Activated naive CD4-positive, alpha-beta T cell treated with anti-CD3 and anti-CD28 coated beads, Interleukin-2, amount 10 ng/mL, durations not matched to agents 7 days and 5 days (primary cell): ENCODE measurements at regions of chr17 and their contacts with region 1.

Region 1: DNA sequence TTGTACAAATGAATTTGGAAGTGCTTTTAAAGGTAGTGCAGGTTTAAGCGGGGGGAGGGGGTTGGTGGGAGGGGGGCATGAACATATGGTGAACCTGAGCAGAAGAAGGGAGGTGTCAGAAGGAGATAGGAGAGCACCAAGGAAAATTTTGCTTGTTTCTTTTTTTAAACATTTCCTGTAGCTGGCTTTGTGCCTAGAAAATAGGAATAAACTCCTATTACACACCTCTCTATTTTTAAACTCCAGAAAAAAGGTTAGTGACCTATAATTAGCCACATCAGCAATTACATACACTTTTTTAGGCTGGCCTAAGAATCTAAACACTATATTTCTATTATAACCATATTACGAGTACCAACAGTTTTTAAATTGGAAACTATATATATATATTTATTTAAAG is 159.1 kb downstream of the SKAP1 start:
- DNase-seq: no peak
- H3K4me3 Mint-ChIP-seq: no peak overlapping the region
- H3K27ac Mint-ChIP-seq: no peak overlapping the region
- H3K4me1 Mint-ChIP-seq: no peaks in the 10 kb centered on the region
- H3K27me3 Mint-ChIP-seq: no peaks in the 10 kb centered on the region

Region 2: DNA sequence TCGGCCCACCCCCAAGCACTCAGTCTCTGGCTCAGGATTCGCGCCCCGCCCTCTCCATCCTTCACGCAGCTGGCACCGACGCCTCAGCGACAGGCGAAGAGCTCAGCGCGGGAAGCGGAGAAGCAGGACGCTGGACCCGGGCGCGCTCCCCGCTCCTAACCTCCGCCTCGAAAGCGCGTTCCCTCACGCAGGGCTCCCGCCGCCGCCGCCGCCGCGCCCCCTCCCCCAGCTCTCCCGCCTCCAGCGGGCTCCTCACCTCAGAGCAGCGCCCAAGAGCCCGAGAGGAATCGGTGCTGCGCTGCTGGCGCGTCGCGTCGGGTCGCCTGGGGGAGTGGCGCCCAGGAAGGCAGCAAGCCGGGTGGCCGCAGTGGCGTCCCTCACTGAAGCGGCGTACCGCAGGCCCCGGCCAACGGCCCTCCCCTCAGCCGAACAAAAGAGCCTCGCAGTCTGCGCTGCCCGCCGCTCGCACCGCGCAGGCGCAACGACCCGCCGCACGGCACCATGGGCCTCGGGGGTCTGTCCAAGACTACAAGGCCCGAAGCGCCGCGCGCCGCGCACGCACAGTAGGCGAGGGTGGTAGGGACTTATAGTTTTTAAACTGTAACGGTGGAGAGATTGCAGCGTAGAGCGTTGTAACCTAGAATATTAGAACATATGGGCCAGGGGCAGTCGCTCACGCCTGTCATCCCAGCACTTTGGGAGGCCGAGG is 169.7 kb before region 1 on chr17 and contains the start of gene CBX1:
- CTCF ChIA-PET with region 1: no interaction called
- DNase-seq: peak; percentile 96
- H3K4me3 Mint-ChIP-seq: peak within 1 kb of the TSS; percentile 97
- H3K27ac Mint-ChIP-seq: peak within 1 kb of the TSS; percentile 93
- H3K4me1 Mint-ChIP-seq: peaks cover 69% of the 10 kb centered on the region
- H3K27me3 Mint-ChIP-seq: no peaks in the 10 kb centered on the region

Region 3: GRCh38 chr17:48259694-48260291 is 11.1 kb before region 1 on chr17:
- CTCF ChIA-PET with region 1: interaction called, 11 read pairs
- DNase-seq: no peak
- H3K4me3 Mint-ChIP-seq: no peak overlapping the region
- H3K27ac Mint-ChIP-seq: no peak overlapping the region
- H3K4me1 Mint-ChIP-seq: no peaks in the 10 kb centered on the region
- H3K27me3 Mint-ChIP-seq: no peaks in the 10 kb centered on the region

Region 4: GRCh38 chr17:48301002-48301401 is 30.1 kb after region 1 on chr17:
- CTCF ChIA-PET with region 1: no interaction called
- DNase-seq: no peak
- H3K4me3 Mint-ChIP-seq: no peak overlapping the region
- H3K27ac Mint-ChIP-seq: no peak overlapping the region
- H3K4me1 Mint-ChIP-seq: peaks cover 33% of the 10 kb centered on the region
- H3K27me3 Mint-ChIP-seq: no peaks in the 10 kb centered on the region

Region 5: GRCh38 chr17:48363161-48363560 is 92.3 kb after region 1 on chr17:
- CTCF ChIA-PET with region 1: no interaction called
- DNase-seq: no peak
- H3K4me3 Mint-ChIP-seq: no peak overlapping the region
- H3K27ac Mint-ChIP-seq: no peak overlapping the region
- H3K4me1 Mint-ChIP-seq: peaks cover 3% of the 10 kb centered on the region
- H3K27me3 Mint-ChIP-seq: no peaks in the 10 kb centered on the region